Activated naive CD4-positive, alpha-beta T cell treated with anti-CD3 and anti-CD28 coated beads, Interleukin-2, amount 10 ng/mL, durations not matched to agents 7 days and 5 days (primary cell): ENCODE measurements at regions of chr3 and their contacts with region 1.

Region 1: DNA sequence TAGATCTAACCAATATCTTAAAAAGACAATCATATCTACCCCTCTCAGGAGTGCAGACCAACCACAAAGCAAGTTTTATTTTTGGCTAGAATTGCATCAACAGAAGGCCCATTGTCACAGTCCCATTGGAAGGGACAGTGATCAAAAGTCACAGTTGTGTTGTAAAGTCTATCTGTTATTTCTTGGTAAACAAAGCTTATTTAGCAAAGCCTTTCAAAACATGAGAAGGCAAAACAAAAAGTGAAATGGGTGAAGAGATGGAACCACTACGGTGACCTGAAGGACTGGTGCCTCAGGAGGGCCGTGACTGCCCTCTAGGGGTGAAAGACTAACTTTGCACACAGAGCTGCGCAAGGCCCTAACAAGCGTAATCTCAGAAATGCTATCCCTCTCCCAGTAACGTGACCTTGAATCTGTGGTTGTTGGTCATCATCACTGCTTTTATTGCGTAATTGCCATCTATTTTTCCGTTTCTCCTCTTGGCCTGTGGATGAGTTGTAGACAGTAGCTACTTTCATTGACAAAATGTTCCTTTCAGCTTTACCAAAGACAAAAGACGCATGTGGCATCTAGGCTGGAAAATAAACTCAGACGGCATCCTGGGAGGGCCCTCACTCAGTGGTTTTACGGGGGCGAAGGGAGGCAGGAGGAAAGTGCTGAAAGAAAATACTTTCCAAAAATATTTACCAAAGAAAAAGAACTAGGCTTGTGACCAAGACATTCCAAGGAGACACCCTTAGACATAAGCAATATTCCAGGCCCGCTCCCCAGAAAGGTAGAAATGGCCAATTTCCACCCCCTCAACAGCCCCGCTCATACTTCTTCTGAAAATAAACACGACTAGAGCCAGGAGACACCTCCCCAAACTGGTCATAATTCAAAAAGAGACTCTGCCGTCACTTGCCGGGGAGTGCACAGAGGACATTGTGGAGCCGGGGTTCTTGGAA is 79.4 kb downstream of the FRMD4B start:
- DNase-seq: peak; percentile 75
- H3K4me3 Mint-ChIP-seq: no peak overlapping the region
- H3K27ac Mint-ChIP-seq: no peak overlapping the region
- H3K4me1 Mint-ChIP-seq: peaks cover 4% of the 10 kb centered on the region
- H3K27me3 Mint-ChIP-seq: no peaks in the 10 kb centered on the region

Region 2: DNA sequence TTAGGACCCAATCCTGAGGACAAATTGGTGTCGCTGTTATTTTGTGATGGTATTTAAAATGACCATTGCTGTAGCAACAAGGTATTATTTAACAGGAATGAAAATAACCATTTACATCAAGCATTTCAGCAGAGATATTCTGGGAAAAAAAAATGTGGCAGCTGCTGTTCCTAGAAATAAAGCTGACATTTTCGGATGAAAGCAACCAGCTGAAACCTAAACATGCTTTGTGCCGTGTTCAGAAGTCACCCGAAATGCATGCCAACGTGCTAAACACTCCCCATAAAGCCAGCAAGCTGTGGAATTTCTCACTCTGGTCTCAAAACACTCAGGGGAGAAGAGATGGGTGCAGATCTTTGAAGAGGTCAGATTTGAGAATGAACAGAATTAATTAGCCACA is 342.6 kb before region 1 on chr3:
- CTCF ChIA-PET with region 1: no interaction called
- DNase-seq: no peak
- H3K4me3 Mint-ChIP-seq: no peak overlapping the region
- H3K27ac Mint-ChIP-seq: no peak overlapping the region
- H3K4me1 Mint-ChIP-seq: no peaks in the 10 kb centered on the region
- H3K27me3 Mint-ChIP-seq: peaks cover 17% of the 10 kb centered on the region

Region 3: DNA sequence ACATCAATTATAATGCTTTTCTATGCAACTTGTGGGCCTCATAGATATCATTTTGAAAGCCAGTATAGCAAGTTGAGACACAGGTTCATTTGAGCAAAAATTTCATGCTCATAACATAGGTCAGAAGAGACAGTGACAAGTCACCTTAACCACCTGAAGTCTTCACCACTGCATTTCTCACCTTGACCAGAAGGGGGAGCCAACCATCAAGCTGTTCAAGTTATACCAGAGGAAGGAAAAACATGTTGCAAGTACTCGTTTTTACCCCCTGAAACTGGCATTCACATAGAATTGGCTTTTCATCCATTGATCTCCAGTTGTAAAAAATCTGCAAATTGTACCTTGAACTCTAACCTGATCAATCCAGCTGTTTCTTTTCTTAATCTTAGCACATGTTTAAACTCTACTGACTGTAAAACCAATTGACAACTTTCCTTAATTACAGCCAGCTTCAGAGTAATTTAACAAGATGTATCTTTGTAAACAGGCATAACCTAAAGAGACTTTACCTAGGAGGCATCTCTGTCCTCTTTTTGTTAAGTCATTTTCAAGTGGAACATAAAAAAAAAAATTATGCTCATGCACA is 185.5 kb before region 1 on chr3:
- CTCF ChIA-PET with region 1: interaction called, 78 read pairs
- DNase-seq: peak; percentile 88
- H3K4me3 Mint-ChIP-seq: no peak overlapping the region
- H3K27ac Mint-ChIP-seq: no peak overlapping the region
- H3K4me1 Mint-ChIP-seq: no peaks in the 10 kb centered on the region
- H3K27me3 Mint-ChIP-seq: peaks cover 21% of the 10 kb centered on the region

Region 4: GRCh38 chr3:69200384-69201068 is 106.0 kb before region 1 on chr3:
- CTCF ChIA-PET with region 1: interaction called, 11 read pairs
- DNase-seq: peak; percentile 52
- H3K4me3 Mint-ChIP-seq: peak overlapping the region; percentile 80
- H3K27ac Mint-ChIP-seq: peak overlapping the region; percentile 95
- H3K4me1 Mint-ChIP-seq: peaks cover 67% of the 10 kb centered on the region
- H3K27me3 Mint-ChIP-seq: no peaks in the 10 kb centered on the region

Region 5: GRCh38 chr3:69324362-69325025 is 18.0 kb after region 1 on chr3:
- CTCF ChIA-PET with region 1: interaction called, 28 read pairs
- DNase-seq: no peak
- H3K4me3 Mint-ChIP-seq: no peak overlapping the region
- H3K27ac Mint-ChIP-seq: peak overlapping the region; percentile 60
- H3K4me1 Mint-ChIP-seq: peaks cover 42% of the 10 kb centered on the region
- H3K27me3 Mint-ChIP-seq: no peaks in the 10 kb centered on the region

Region 6: GRCh38 chr3:69425261-69425660 is 118.7 kb after region 1 on chr3:
- CTCF ChIA-PET with region 1: interaction called, 58 read pairs
- DNase-seq: peak; percentile 41
- H3K4me3 Mint-ChIP-seq: no peak overlapping the region
- H3K27ac Mint-ChIP-seq: no peak overlapping the region
- H3K4me1 Mint-ChIP-seq: peaks cover 2% of the 10 kb centered on the region
- H3K27me3 Mint-ChIP-seq: peaks cover 4% of the 10 kb centered on the region

Region 7: DNA sequence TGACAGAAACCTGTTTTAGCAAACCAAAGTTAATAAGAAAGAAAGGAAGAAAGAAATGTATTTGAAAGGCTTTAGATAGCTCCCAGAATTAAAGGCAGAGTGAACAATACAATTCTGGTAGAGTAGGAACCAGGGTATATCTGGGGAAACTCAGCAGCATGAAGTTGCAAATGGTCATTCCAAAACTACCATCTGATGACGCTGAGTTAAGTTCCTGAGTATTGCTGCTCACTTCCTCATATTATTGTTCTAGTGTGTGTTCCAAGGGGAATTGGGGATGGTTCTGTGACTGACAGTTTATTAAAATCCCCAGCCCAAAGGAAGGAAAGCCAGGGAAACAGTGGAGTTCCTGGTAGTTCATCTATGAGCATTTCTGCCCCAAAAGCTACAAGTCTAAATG is 167.7 kb after region 1 on chr3:
- CTCF ChIA-PET with region 1: no interaction called
- DNase-seq: no peak
- H3K4me3 Mint-ChIP-seq: no peak overlapping the region
- H3K27ac Mint-ChIP-seq: no peak overlapping the region
- H3K4me1 Mint-ChIP-seq: no peaks in the 10 kb centered on the region
- H3K27me3 Mint-ChIP-seq: no peaks in the 10 kb centered on the region

Region 8: DNA sequence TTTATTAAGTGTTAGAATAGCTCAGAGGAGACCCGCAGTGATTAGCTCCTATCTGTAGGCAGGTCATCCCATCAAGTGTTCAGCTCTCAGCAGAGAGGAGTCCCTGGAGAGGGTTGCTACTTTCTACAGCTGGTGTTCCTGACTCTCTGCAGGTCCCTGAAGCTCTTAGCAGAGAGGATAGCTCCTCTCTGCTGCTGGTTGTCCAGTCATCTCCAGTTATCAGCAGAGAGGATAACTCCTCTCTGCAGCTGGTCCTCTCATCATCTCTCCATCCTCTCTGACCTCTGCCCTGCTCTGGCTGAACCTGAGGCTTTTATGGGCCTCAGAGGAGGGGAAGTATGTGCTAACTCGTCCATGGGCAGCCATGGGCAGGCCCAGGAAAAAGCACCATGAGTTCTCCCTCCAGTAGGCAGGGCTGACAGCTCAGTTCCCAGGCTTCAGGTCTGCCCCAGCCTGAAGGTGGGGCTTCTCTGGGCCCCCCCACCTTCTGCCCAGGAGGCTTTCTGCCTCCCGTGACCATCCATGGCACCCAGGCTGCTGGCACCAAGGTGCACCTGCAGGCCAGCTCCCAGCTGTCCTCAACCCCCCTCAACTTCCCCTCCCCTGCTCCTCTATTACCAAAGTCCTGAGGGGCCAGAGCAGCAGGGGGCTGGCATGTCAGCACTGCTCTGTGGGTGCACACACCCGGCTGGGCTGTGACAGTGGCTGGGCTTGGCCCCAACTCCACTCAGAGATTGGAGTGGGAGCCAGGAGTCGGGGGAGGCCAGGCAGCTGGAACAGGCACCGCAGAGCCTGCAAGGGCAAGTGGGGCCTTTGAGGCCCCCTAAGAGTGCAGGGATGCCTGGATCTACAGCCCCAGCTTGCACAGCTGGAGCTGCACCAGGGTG is 178.2 kb after region 1 on chr3:
- CTCF ChIA-PET with region 1: no interaction called
- DNase-seq: no peak
- H3K4me3 Mint-ChIP-seq: no peak overlapping the region
- H3K27ac Mint-ChIP-seq: no peak overlapping the region
- H3K4me1 Mint-ChIP-seq: no peaks in the 10 kb centered on the region
- H3K27me3 Mint-ChIP-seq: no peaks in the 10 kb centered on the region

Region 9: GRCh38 chr3:69594286-69594685 is 287.8 kb after region 1 on chr3:
- CTCF ChIA-PET with region 1: no interaction called
- DNase-seq: no peak
- H3K4me3 Mint-ChIP-seq: no peak overlapping the region
- H3K27ac Mint-ChIP-seq: no peak overlapping the region
- H3K4me1 Mint-ChIP-seq: no peaks in the 10 kb centered on the region
- H3K27me3 Mint-ChIP-seq: no peaks in the 10 kb centered on the region